Activated CD4-positive, alpha-beta T cell treated with anti-CD3 and anti-CD28 coated beads for 36 hours (primary cell): ENCODE measurements at regions of chr6 and their contacts with region 1.

Region 1: DNA sequence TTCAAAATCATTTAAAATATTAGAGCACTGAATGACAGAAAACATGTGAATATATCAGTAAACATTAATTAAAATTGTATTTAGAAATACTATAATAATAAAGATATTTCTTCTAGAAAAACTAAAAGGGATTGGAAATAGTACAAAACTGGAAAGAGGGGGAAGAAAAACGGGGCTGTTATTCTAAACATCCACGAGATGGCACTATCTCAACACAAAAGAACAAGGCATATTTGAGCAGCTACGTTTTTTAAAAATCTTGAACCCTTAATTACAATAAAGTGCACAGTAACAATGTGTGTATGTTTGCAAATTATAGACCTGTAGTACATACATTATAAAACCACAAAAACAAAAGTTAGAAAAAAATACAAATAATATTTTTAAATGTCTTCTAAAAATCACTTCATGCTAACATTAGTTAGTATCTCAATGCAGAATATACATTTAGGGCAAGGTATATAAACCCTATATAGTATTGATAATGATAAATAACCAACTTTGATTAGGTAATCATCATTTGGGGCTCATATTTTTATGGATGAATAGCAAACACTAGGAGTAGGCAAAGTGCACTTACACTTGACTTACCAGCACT is 42.5 kb upstream of the PNISR start:
- DNase-seq: no peak
- ATAC-seq: no peak
- H3K4me3 Mint-ChIP-seq: no peak overlapping the region
- H3K27ac Mint-ChIP-seq: no peak overlapping the region
- H3K4me1 Mint-ChIP-seq: no peaks in the 10 kb centered on the region
- H3K27me3 Mint-ChIP-seq: no peaks in the 10 kb centered on the region

Region 2: GRCh38 chr6:99530627-99531026 is 63.0 kb after region 1 on chr6:
- CTCF ChIA-PET with region 1: no interaction called
- POLR2A ChIA-PET with region 1: no interaction called
- intact Hi-C with region 1: no loop called
- DNase-seq: no peak
- ATAC-seq: no peak
- H3K4me3 Mint-ChIP-seq: no peak overlapping the region
- H3K27ac Mint-ChIP-seq: no peak overlapping the region
- H3K4me1 Mint-ChIP-seq: no peaks in the 10 kb centered on the region
- H3K27me3 Mint-ChIP-seq: no peaks in the 10 kb centered on the region

Region 3: GRCh38 chr6:99746261-99746895 is 278.8 kb after region 1 on chr6:
- CTCF ChIA-PET with region 1: interaction called, 29 read pairs
- POLR2A ChIA-PET with region 1: no interaction called
- intact Hi-C with region 1: loop called (anchors 1 kb)
- DNase-seq: peak; percentile 61
- ATAC-seq: peak; percentile 73
- H3K4me3 Mint-ChIP-seq: no peak overlapping the region
- H3K27ac Mint-ChIP-seq: no peak overlapping the region
- H3K4me1 Mint-ChIP-seq: no peaks in the 10 kb centered on the region
- H3K27me3 Mint-ChIP-seq: peaks cover 21% of the 10 kb centered on the region

Region 4: DNA sequence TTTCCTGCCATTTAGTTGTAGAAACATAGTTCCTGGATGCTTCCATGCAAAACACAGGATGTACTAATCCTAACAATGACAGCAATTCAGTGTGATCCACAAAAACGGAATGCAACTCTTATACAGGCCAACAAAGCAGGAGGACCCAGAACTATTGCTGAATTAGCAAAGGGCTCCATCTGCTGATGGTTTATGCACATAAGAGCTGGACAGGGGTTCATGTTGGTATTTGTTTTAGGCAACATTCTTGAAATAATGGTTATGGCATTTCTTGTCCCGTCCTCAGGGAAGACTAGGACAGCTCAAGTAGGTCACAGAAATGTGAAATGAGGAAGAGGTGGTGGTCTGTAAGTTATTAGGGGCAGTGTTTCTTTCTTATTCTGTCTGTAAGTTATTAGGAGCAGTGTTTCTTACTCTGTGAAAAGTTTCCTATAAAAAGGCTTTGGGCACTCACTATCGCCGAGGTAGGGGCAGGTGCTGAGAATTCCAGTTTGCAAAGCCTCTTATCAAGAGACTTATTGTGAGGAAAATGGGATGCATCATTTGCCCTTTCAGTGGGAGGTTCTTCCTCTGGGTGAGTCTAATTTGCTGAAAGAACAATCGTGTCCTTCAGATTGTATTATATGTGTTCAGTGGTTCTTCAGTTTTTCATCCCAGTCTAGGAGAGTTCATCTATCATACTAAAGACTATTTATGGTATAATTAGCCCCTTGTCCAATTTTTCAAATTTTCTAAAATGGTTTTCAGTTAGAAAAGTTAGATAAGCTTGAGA is 355.3 kb after region 1 on chr6:
- CTCF ChIA-PET with region 1: no interaction called
- POLR2A ChIA-PET with region 1: no interaction called
- intact Hi-C with region 1: loop called in 1 of 2 experiments (anchors 10 kb)
- DNase-seq: peak; percentile 7
- ATAC-seq: peak; percentile 49
- H3K4me3 Mint-ChIP-seq: peak overlapping the region; percentile 12
- H3K27ac Mint-ChIP-seq: no peak overlapping the region
- H3K4me1 Mint-ChIP-seq: peaks cover 7% of the 10 kb centered on the region
- H3K27me3 Mint-ChIP-seq: peaks cover 20% of the 10 kb centered on the region

Region 5: GRCh38 chr6:100099189-100100074 is 631.8 kb after region 1 on chr6:
- CTCF ChIA-PET with region 1: no interaction called
- POLR2A ChIA-PET with region 1: no interaction called
- intact Hi-C with region 1: loop called in 1 of 2 experiments (anchors 10 kb)
- DNase-seq: no peak
- ATAC-seq: no peak
- H3K4me3 Mint-ChIP-seq: no peak overlapping the region
- H3K27ac Mint-ChIP-seq: no peak overlapping the region
- H3K4me1 Mint-ChIP-seq: no peaks in the 10 kb centered on the region
- H3K27me3 Mint-ChIP-seq: peaks cover 2% of the 10 kb centered on the region